Activated CD4-positive, alpha-beta memory T cell treated with anti-CD3 and anti-CD28 coated beads for 36 hours (primary cell): ENCODE measurements at regions of chr2 and their contacts with region 1.

Region 1: DNA sequence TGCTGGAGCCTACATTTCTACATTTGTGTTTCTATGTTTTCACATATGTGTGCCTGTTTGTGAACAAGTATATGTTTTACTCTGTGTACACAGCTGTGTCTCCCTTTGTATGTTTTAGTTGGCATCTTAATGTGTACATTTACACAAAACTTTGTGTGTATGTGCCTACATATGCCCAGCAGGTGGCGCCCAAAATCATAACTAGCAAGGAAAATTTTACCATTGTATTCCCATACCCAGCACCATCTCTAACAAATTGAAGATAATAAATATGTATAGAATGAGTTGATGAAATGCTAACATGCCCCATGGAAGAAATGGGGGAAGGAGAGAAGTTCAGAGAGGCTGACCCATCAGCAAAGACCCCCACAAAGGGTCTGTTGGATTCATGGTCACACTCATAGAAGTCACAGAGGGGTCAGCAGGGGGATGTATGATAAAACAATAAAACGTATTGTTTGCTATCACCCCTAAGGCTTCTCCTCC is 48.1 kb downstream of the PKDCC start:
- DNase-seq: peak; percentile 82
- H3K4me3 Mint-ChIP-seq: no peak overlapping the region
- H3K27ac Mint-ChIP-seq: no peak overlapping the region
- H3K4me1 Mint-ChIP-seq: peaks cover 38% of the 10 kb centered on the region
- H3K27me3 Mint-ChIP-seq: no peaks in the 10 kb centered on the region

Region 2: GRCh38 chr2:42040643-42041278 is 55.2 kb before region 1 on chr2:
- CTCF ChIA-PET with region 1: no interaction called
- POLR2A ChIA-PET with region 1: no interaction called
- intact Hi-C with region 1: no loop called
- DNase-seq: no peak
- H3K4me3 Mint-ChIP-seq: no peak overlapping the region
- H3K27ac Mint-ChIP-seq: no peak overlapping the region
- H3K4me1 Mint-ChIP-seq: no peaks in the 10 kb centered on the region
- H3K27me3 Mint-ChIP-seq: peaks cover 14% of the 10 kb centered on the region

Region 3: DNA sequence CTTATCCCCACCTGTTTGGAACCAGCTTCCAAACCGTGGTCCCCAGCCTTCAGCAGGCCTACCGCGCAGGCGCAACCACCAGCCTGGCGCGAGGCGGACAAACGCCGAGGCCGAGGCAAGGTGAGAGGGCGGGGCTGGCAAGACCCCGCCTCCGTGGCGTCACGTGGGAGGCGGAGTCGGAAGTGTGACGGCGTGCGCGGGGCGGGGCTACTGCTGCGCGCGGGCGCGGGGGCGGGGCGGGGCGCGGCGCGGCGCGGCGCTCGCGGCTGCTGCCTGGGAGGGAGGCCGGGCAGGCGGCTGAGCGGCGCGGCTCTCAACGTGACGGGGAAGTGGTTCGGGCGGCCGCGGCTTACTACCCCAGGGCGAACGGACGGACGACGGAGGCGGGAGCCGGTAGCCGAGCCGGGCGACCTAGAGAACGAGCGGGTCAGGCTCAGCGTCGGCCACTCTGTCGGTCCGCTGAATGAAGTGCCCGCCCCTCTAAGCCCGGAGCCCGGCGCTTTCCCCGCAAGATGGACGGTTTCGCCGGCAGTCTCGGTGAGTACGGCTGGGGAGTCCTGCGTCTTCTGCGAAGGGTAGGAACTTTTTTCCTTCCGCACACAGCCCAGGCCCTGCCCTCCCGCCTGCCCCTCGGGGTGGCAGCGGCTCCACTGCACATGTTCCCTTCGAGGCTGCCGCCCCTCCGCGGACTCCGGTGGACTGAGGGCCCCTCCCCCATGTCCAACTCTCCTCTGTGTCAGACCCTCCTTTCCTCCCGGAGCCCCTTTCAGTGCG is 73.3 kb after region 1 on chr2 and contains the start of gene EML4:
- CTCF ChIA-PET with region 1: interaction called, 11 read pairs
- POLR2A ChIA-PET with region 1: no interaction called
- intact Hi-C with region 1: no loop called
- DNase-seq: peak; percentile 94
- H3K4me3 Mint-ChIP-seq: no peak within 1 kb of the TSS
- H3K27ac Mint-ChIP-seq: no peak within 1 kb of the TSS
- H3K4me1 Mint-ChIP-seq: peaks cover 22% of the 10 kb centered on the region
- H3K27me3 Mint-ChIP-seq: no peaks in the 10 kb centered on the region
- total RNA-seq, gene EML4: 67.4 to 69.8 TPM

Region 4: DNA sequence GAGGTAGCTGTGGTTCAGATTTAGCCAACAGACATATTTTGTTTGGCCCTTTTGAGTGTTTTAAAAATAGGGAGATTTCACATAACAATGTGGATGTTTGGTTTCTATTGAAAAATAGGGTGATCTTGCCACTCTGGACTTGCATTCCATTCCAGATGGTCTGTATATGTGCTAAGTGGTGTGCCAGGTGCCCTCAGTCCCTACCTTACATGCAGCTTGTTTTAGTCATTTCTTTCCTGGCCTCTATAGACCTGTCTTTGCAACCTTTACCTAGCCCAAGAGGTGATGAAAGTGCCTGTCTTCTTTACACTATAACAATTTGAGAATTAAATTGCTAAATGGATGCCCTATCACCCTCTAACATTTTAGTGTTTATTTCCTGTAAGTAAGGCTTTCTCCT is 84.3 kb after region 1 on chr2:
- CTCF ChIA-PET with region 1: interaction called, 10 read pairs
- POLR2A ChIA-PET with region 1: no interaction called
- intact Hi-C with region 1: no loop called
- DNase-seq: no peak
- H3K4me3 Mint-ChIP-seq: no peak overlapping the region
- H3K27ac Mint-ChIP-seq: peak overlapping the region; percentile 72
- H3K4me1 Mint-ChIP-seq: peaks cover 74% of the 10 kb centered on the region
- H3K27me3 Mint-ChIP-seq: no peaks in the 10 kb centered on the region

Region 5: GRCh38 chr2:42238644-42239288 is 142.8 kb after region 1 on chr2:
- CTCF ChIA-PET with region 1: interaction called, 84 read pairs
- POLR2A ChIA-PET with region 1: no interaction called
- intact Hi-C with region 1: loop called (anchors 1 kb)
- DNase-seq: peak; percentile 66
- H3K4me3 Mint-ChIP-seq: no peak overlapping the region
- H3K27ac Mint-ChIP-seq: no peak overlapping the region
- H3K4me1 Mint-ChIP-seq: peaks cover 77% of the 10 kb centered on the region
- H3K27me3 Mint-ChIP-seq: no peaks in the 10 kb centered on the region

Region 6: DNA sequence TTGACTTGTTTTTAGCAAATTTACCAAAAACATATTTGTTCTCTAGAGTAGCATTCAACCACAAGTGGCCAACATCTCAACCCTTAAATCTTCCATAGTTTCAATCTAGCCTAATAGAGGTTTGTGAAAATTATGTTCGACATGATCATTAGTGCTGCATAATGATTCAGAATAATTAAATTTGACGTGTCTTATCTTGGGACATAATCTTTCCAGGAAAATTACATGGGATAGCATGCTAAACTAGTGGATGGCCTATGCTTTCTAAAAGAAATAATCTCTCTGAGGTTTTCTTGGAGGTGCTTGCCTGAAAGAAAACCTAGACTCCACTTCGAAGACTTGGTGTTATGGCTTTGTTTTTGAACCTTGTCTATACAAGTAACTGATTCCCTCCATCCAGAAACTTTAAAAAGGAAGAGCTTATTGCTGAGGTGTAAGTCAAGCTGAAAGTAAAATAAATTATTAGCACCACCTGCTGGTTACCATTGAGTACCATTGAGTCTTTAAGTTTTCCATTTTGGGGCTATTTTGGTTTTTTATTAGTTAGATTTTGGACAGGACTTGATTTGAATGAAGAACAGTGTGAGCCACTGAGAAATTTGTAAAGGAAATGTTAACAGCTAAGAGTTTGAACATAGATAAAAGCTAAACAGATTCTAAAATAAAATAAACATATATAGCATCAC is 232.3 kb after region 1 on chr2:
- CTCF ChIA-PET with region 1: interaction called, 86 read pairs
- POLR2A ChIA-PET with region 1: no interaction called
- intact Hi-C with region 1: loop called (anchors 1 kb)
- DNase-seq: no peak
- H3K4me3 Mint-ChIP-seq: no peak overlapping the region
- H3K27ac Mint-ChIP-seq: peak overlapping the region; percentile 54
- H3K4me1 Mint-ChIP-seq: peaks cover 5% of the 10 kb centered on the region
- H3K27me3 Mint-ChIP-seq: no peaks in the 10 kb centered on the region